ENCODE measurements at regions of chr17 and their contacts with region 1.

Region 1: DNA sequence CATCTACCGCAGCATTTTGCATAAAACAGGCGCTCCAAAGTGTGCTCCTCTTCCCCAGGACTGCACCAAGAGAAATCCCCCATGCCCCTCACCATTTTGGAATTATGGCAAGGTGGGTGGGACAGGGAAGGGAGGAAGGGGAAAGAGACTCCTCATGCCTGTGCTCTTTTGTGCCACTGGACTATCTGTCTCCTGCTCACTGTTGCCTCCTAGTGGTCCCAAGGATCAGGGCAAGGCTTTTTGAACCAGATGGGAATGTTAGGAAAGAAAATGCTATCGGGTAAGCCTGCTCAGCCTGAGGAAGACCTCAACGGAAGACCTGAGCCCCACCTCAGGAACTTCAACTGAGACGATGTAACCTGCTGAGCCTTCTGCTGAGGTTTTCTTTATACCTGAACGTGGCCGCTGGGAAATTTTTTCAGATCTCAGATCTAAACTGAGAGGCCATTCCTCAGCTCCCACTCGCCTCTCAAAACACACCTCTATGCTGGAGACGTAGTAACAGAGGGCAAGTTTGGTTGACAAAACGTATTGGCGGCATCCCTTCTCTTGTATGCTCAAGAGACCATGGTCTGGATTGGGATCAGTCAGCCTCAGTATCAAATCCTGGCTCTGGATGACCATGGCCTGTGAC is 58.3 kb downstream of the SPACA3 start:
- DNase-seq: no peak
- H3K4me3 ChIP-seq: no peak overlapping the region
- H3K27ac ChIP-seq: no peak overlapping the region
- H3K4me1 ChIP-seq: peaks cover 15% of the 10 kb centered on the region
- H3K27me3 ChIP-seq: no peaks in the 10 kb centered on the region
- CTCF ChIP-seq: peak; percentile 89 to 93

Region 2: GRCh38 chr17:32954477-32954876 is 95.4 kb before region 1 on chr17:
- CTCF ChIA-PET with region 1: no interaction called
- dilution Hi-C with region 1: loop called (anchors 5 kb)
- in situ Hi-C with region 1: no loop called
- intact Hi-C with region 1: no loop called
- DNase-seq: no peak
- H3K4me3 ChIP-seq: no peak overlapping the region
- H3K27ac ChIP-seq: no peak overlapping the region
- H3K4me1 ChIP-seq: no peaks in the 10 kb centered on the region
- H3K27me3 ChIP-seq: no peaks in the 10 kb centered on the region
- CTCF ChIP-seq: no peak

Region 3: DNA sequence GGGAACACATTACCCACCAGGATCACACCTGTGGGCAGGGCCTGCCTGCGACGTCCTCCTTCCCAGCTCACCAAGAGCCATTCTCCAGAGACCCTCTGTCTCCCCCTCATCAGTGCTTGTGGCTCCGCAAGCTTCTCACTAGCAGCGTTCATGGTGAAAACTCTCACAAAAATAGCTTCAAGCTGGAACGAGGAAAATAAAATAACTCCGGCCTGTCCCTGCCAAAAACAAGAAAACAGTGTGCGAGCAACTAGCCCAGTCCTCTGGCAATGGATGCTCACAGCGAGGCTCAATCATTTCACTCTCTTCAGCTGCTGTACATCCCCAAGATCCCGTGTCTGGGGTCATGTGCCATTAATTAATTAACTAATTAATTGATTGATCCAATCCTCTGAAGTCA is 40.3 kb before region 1 on chr17:
- CTCF ChIA-PET with region 1: no interaction called
- dilution Hi-C with region 1: loop called (anchors 10 kb)
- in situ Hi-C with region 1: no loop called
- intact Hi-C with region 1: no loop called
- DNase-seq: no peak
- H3K4me3 ChIP-seq: no peak overlapping the region
- H3K27ac ChIP-seq: no peak overlapping the region
- H3K4me1 ChIP-seq: peaks cover 21% of the 10 kb centered on the region
- H3K27me3 ChIP-seq: no peaks in the 10 kb centered on the region
- CTCF ChIP-seq: no peak

Region 4: DNA sequence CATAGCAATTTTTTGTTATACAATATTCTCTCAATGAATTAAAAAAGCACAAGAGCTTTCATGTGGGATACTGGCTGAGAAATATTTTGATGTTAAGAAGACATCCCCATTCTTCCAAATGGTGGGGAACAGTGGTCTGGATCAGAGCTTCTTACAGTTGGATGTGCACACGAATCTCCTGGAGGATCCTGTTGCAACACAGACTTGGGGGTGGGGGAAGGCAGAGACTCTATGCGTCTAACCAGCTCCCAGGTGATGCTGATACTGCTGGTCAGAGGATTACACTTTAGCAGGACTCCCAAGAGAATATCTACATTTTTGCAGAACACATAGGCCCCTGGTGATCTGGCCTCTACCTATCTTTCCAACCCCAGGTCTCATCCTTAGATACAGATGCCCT is 50.0 kb after region 1 on chr17:
- CTCF ChIA-PET with region 1: no interaction called
- dilution Hi-C with region 1: loop called (anchors 5 kb)
- in situ Hi-C with region 1: no loop called
- intact Hi-C with region 1: loop called (anchors 5 kb)
- DNase-seq: no peak
- H3K4me3 ChIP-seq: no peak overlapping the region
- H3K27ac ChIP-seq: no peak overlapping the region
- H3K4me1 ChIP-seq: no peaks in the 10 kb centered on the region
- H3K27me3 ChIP-seq: no peaks in the 10 kb centered on the region
- CTCF ChIP-seq: no peak

Region 5: DNA sequence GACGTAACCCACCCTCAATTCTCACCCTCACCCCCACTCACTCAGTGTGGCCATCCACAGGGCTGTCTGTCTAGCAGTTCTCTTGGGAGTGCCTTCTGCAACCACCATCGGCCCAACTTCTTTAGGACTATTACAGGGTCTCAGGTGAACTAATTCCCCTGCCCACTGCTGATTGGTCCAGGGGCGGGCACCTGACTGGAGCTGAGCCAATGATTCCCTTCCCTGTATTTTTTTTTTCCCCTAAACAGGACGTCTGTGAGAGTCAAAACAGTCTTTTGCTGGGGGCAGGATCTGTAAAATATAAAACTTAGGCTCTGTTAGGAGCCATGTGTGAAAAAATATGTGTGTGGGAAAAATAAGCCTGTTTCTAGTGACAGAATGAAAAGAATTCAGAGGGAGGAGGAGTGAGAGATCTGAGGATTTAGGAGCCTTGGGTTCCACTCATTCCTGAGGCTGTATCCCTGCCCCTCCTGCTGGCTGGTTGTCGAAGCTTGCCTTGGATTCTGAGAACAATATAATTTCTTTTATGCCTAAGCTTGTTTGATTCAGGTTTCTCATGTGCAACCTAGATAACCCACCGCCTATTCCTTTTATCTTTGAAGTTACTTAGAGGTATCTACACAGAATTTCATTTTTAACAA is 56.7 kb after region 1 on chr17:
- CTCF ChIA-PET with region 1: no interaction called
- dilution Hi-C with region 1: loop called (anchors 5 kb)
- in situ Hi-C with region 1: no loop called
- intact Hi-C with region 1: loop called (anchors 5 kb)
- DNase-seq: no peak
- H3K4me3 ChIP-seq: no peak overlapping the region
- H3K27ac ChIP-seq: no peak overlapping the region
- H3K4me1 ChIP-seq: peaks cover under 1% of the 10 kb centered on the region
- H3K27me3 ChIP-seq: no peaks in the 10 kb centered on the region
- CTCF ChIP-seq: peak in 1 of 2 donors; percentile 35

Region 6: DNA sequence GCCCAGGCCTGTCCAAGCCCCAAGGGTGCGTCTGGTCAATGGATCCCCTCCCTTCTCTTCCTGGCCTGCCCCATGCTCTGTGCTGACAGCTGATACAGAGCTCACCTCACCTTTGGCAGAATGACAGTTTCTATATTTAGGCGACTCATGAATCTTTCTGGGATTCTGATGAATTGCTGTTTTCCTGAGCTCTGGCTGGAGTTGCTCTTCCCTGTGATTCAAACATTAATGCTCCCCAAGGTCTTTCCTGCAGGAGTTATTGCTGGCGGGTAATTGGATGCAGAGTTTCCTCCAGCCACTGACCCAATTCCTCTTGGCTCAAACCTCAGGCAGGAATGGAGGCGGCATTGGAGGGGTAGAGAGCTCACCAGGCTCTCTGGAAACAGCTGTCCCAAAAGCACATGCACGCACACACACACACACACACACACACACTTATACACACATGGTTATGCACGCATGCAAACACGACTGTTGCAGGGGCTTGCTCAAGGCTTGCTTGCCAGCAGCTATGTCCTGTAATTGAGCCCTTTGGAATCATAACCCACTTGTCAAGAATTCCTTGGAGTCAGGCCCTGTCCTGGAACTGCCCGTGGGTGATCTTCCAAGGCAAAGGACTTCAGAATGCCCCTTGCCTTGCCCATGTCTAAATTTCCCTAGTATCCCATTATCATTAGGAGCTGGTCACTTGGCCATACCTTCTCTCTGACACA is 114.4 kb after region 1 on chr17:
- CTCF ChIA-PET with region 1: no interaction called
- dilution Hi-C with region 1: loop called (anchors 10 kb)
- in situ Hi-C with region 1: no loop called
- intact Hi-C with region 1: no loop called
- DNase-seq: peak; percentile 71
- H3K4me3 ChIP-seq: no peak overlapping the region
- H3K27ac ChIP-seq: no peak overlapping the region
- H3K4me1 ChIP-seq: peaks cover 21% of the 10 kb centered on the region
- H3K27me3 ChIP-seq: no peaks in the 10 kb centered on the region
- CTCF ChIP-seq: no peak

Region 7: GRCh38 chr17:33200587-33200986 is 150.7 kb after region 1 on chr17:
- CTCF ChIA-PET with region 1: no interaction called
- dilution Hi-C with region 1: no loop called
- in situ Hi-C with region 1: no loop called
- intact Hi-C with region 1: loop called (anchors 5 kb)
- DNase-seq: peak; percentile 9
- H3K4me3 ChIP-seq: no peak overlapping the region
- H3K27ac ChIP-seq: no peak overlapping the region
- H3K4me1 ChIP-seq: no peaks in the 10 kb centered on the region
- H3K27me3 ChIP-seq: no peaks in the 10 kb centered on the region
- CTCF ChIP-seq: peak; percentile 14 to 31